Naive thymus-derived CD4-positive, alpha-beta T cell (primary cell): ENCODE measurements at regions of chr11 and their contacts with region 1.

Region 1: GRCh38 chr11:35165423-35166368 is 26.7 kb downstream of the CD44 start:
- DNase-seq: peak; percentile 39 to 99 (median 98)
- ATAC-seq: peak; percentile 81
- H3K4me3 ChIP-seq: peak overlapping the region; percentile 49
- H3K4me3 Mint-ChIP-seq: peak overlapping the region; percentile 69 to 94 (median 85)
- H3K27ac ChIP-seq: peak overlapping the region; percentile 94
- H3K27ac Mint-ChIP-seq: peak overlapping the region; percentile 89 to 100 (median 100)
- H3K4me1 ChIP-seq: peaks cover 96% of the 10 kb centered on the region in 2 donors
- H3K4me1 Mint-ChIP-seq: peaks cover 66 to 100% (median 100%) of the 10 kb centered on the region in 7 donors
- H3K27me3 ChIP-seq: no peaks in the 10 kb centered on the region
- H3K27me3 Mint-ChIP-seq: no peaks in the 10 kb centered on the region

Region 2: DNA sequence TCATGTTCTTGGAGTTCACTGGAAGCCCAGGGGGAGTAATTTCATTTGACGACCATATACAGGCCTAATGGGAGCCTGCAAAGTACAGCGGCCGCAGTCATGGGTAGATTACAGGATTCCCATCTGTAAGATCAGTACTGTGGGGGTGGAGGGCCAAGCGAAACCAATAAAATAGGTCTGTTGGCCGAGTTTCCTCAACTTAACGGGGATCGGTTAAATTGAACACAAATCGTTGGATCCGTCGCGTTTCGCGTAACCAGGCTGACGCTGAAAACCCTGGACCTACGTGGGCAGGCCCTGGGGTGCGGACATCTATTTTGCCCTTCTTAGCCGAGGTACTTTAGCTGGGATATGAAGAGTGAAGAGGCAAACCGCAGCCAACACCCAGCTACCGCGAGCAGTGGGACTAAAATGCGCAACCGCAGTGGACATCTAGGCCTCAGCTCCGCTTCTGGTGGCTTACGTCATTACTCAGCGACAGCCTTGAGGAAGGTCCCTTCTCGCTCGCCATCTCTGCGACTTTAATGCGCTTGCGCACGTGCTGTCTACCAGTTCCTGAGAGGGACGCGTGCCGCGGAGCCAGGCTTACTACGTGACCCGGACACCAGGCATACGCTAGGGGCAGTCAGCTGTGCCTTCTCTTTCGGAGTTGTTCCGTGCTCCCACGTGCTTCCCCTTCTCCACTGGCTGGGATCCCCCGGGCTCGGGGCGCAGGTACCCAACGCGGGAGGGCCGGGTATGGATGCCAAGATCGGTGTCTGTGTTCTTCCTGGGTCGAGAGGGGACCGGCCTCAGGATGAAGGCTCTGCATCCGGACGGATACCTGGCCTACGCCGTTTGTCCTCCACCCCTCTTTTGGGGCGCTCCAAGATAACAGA is 1060.4 kb before region 1 on chr11 and contains the start of gene NAT10:
- CTCF ChIA-PET with region 1: no interaction called
- POLR2A ChIA-PET with region 1: no interaction called
- intact Hi-C with region 1: loop called in 1 of 2 experiments (anchors 5 kb)
- DNase-seq: peak; percentile 84 to 98 (median 96)
- ATAC-seq: peak; percentile 97
- H3K4me3 ChIP-seq: peak within 1 kb of the TSS; percentile 91
- H3K4me3 Mint-ChIP-seq: peak within 1 kb of the TSS; percentile 89 to 100 (median 97)
- H3K27ac ChIP-seq: peak within 1 kb of the TSS; percentile 83
- H3K27ac Mint-ChIP-seq: peak within 1 kb of the TSS; percentile 97 to 99 (median 99)
- H3K4me1 ChIP-seq: peaks cover 18 to 21% of the 10 kb centered on the region in 2 donors
- H3K4me1 Mint-ChIP-seq: peaks cover 26 to 76% (median 64%) of the 10 kb centered on the region in 7 donors
- H3K27me3 ChIP-seq: no peaks in the 10 kb centered on the region
- H3K27me3 Mint-ChIP-seq: peaks cover 0 to 5% (median 0%) of the 10 kb centered on the region in 5 donors
- total RNA-seq, gene NAT10: 55.7 to 104 (median 84.3) TPM

Region 3: DNA sequence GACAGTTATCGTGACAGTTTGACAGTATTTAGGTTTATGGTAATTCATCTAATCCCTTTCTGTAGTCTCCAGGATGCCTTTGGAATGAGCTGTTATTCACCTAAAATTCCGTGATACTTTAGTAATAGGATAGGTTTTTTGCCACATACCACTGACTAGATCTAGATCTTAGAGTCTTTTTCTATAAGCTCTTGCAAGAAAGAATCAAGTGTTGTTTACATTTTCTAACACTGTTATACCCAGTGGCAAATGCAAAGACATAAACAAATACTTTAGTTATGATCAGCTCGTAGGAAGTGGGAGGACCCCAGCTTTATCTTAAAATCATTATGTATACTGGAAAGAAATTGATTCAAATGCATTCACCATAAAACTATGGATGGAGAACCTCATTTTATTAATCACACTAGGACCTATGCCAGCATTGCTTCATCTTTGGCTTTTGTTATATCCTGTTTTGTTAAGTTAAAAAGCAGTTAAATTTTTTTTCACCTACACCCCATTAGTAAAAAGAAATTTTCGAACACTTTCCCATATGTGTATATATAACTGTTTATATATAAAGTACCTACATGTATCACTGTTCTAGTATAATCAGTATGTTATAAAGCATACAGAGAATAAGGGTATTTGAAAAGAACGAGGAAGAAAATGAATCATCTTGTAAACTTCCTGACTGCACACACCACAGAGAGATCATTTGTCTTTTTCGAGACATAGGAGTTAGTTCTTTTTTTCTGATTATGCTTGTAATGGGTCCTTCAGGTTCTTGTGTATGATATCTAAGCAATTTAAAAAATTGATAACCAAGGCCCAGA is 188.4 kb before region 1 on chr11:
- CTCF ChIA-PET with region 1: no interaction called
- POLR2A ChIA-PET with region 1: no interaction called
- intact Hi-C with region 1: no loop called
- DNase-seq: no peak
- ATAC-seq: no peak
- H3K4me3 ChIP-seq: no peak overlapping the region
- H3K4me3 Mint-ChIP-seq: no peak overlapping the region
- H3K27ac ChIP-seq: no peak overlapping the region
- H3K27ac Mint-ChIP-seq: peak overlapping the region in 1 of 9 donors; percentile 1
- H3K4me1 ChIP-seq: no peaks in the 10 kb centered on the region
- H3K4me1 Mint-ChIP-seq: peaks cover 17 to 46% (median 30%) of the 10 kb centered on the region in 7 donors
- H3K27me3 ChIP-seq: no peaks in the 10 kb centered on the region
- H3K27me3 Mint-ChIP-seq: no peaks in the 10 kb centered on the region

Region 4: DNA sequence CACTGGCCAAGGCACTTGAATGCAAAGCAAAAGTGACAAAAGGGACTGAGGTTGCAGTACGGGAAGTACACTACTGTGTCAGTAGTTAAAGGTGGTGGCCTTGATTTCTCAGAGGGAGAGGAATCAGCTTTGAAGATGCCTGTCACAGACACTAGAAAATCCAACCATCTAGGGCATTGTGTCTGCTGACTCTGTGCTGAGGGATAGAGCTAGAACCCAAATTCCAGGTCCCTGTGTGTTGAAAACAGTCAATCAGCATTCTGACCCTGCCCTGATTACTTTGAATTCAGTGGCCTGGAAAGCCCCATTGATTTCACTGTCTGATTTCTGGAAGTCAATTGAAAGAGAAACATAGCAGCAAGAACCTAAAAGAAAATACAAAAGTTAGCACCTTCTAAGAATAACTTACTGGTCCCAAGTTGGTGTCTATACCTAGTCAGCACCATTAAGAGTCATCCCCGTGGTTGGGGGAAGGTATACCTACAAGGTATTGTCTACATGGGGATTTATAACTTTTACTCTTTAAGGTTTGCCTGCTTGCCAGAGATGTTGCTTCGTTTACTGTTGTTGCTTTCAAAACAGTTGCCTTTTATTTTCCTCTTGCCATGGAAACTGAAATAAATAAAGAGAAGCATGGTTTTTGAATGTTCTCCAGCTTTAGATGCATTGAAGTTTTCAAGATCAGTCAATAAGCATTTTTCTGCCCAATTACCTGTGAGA is 152.0 kb before region 1 on chr11:
- CTCF ChIA-PET with region 1: no interaction called
- POLR2A ChIA-PET with region 1: interaction called, 6 read pairs
- intact Hi-C with region 1: loop called in 1 of 2 experiments (anchors 1 kb)
- DNase-seq: peak in 8 of 9 donors; percentile 8 to 68 (median 40)
- ATAC-seq: peak; percentile 79
- H3K4me3 ChIP-seq: no peak overlapping the region
- H3K4me3 Mint-ChIP-seq: peak overlapping the region; percentile 12 to 80 (median 49)
- H3K27ac ChIP-seq: peak overlapping the region; percentile 49
- H3K27ac Mint-ChIP-seq: peak overlapping the region; percentile 66 to 95 (median 84)
- H3K4me1 ChIP-seq: peaks cover 18 to 25% of the 10 kb centered on the region in 2 donors
- H3K4me1 Mint-ChIP-seq: peaks cover 19 to 40% (median 27%) of the 10 kb centered on the region in 7 donors
- H3K27me3 ChIP-seq: no peaks in the 10 kb centered on the region
- H3K27me3 Mint-ChIP-seq: peaks cover 0 to 40% (median 0%) of the 10 kb centered on the region in 5 donors

Region 5: DNA sequence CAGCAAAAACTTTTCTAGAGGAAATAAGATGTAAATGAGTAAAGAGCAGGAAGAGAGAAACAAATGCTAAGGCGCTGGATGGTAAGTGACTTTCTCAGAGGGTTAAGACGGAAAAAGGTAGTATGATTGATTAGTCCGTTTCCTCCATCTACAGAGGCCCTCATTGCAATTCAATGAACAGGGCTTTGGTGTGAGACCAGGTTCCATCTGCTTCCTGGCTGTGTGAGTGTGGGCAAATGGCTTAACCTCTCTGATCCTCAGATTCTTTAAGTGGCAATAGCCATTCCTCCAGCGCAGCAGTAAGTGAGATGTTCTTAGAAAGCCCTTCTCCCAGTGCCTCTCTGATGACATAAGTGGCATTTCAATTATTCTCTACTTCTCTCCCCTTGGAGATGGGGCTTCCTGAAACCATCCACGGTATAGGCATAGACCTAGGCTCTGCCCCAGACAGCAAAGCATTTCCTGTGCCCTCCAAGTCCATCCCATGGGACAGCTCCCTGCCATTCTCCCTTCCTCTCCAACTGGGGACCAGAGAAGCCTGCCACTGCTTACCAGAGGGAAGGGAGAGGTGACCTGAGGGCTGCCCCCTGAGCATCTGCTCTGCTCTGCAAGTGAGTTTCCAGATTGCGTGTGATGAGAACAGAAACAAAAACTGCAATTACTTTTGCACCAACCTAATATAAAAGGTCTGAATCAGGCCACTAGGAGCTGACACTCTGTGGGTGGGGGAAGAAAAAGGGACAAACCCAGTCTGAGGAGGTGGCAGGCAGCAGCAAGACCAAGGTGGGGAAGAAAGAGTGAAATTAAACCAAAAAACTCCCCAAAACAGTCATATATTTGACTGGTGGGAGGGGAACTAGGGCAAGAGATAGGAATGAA is 39.5 kb before region 1 on chr11:
- CTCF ChIA-PET with region 1: no interaction called
- POLR2A ChIA-PET with region 1: interaction called, 3 read pairs
- intact Hi-C with region 1: loop called in 1 of 2 experiments (anchors 5 kb)
- DNase-seq: peak in 2 of 9 donors; percentile 27 to 62
- ATAC-seq: peak; percentile 59
- H3K4me3 ChIP-seq: peak overlapping the region; percentile 17
- H3K4me3 Mint-ChIP-seq: peak overlapping the region; percentile 42 to 69 (median 60)
- H3K27ac ChIP-seq: peak overlapping the region; percentile 12
- H3K27ac Mint-ChIP-seq: peak overlapping the region; percentile 44 to 92 (median 82)
- H3K4me1 ChIP-seq: peaks cover 33 to 49% of the 10 kb centered on the region in 2 donors
- H3K4me1 Mint-ChIP-seq: peaks cover 32 to 69% (median 64%) of the 10 kb centered on the region in 7 donors
- H3K27me3 ChIP-seq: no peaks in the 10 kb centered on the region
- H3K27me3 Mint-ChIP-seq: peaks cover 0 to 8% (median 0%) of the 10 kb centered on the region in 5 donors

Region 6: GRCh38 chr11:35178873-35179272 is 13.2 kb after region 1 on chr11:
- CTCF ChIA-PET with region 1: interaction called, 27 read pairs
- POLR2A ChIA-PET with region 1: interaction called, 354 read pairs
- intact Hi-C with region 1: loop called (anchors 1 kb)
- DNase-seq: no peak
- ATAC-seq: no peak
- H3K4me3 ChIP-seq: no peak overlapping the region
- H3K4me3 Mint-ChIP-seq: peak overlapping the region in 9 of 10 donors; percentile 44 to 77 (median 59)
- H3K27ac ChIP-seq: peak overlapping the region; percentile 65
- H3K27ac Mint-ChIP-seq: peak overlapping the region; percentile 85 to 100 (median 94)
- H3K4me1 ChIP-seq: peaks cover 84 to 89% of the 10 kb centered on the region in 2 donors
- H3K4me1 Mint-ChIP-seq: peaks cover 62 to 93% (median 91%) of the 10 kb centered on the region in 7 donors
- H3K27me3 ChIP-seq: no peaks in the 10 kb centered on the region
- H3K27me3 Mint-ChIP-seq: no peaks in the 10 kb centered on the region

Region 7: GRCh38 chr11:35246745-35247144 is 81.0 kb after region 1 on chr11:
- CTCF ChIA-PET with region 1: interaction called, 3 read pairs
- POLR2A ChIA-PET with region 1: interaction called, 7 read pairs
- intact Hi-C with region 1: loop called in 1 of 2 experiments (anchors 1 kb)
- DNase-seq: no peak
- ATAC-seq: no peak
- H3K4me3 ChIP-seq: no peak overlapping the region
- H3K4me3 Mint-ChIP-seq: peak overlapping the region in 5 of 10 donors; percentile 14 to 81 (median 70)
- H3K27ac ChIP-seq: peak overlapping the region; percentile 75
- H3K27ac Mint-ChIP-seq: peak overlapping the region; percentile 40 to 100 (median 99)
- H3K4me1 ChIP-seq: peaks cover 58 to 63% of the 10 kb centered on the region in 2 donors
- H3K4me1 Mint-ChIP-seq: peaks cover 24 to 92% (median 69%) of the 10 kb centered on the region in 7 donors
- H3K27me3 ChIP-seq: no peaks in the 10 kb centered on the region
- H3K27me3 Mint-ChIP-seq: peaks cover 0 to 4% (median 0%) of the 10 kb centered on the region in 5 donors

Region 8: GRCh38 chr11:35343033-35343598 is 177.4 kb after region 1 on chr11:
- CTCF ChIA-PET with region 1: no interaction called
- POLR2A ChIA-PET with region 1: no interaction called
- intact Hi-C with region 1: loop called in 1 of 2 experiments (anchors 1 kb)
- DNase-seq: peak in 8 of 9 donors; percentile 19 to 69 (median 54)
- ATAC-seq: peak; percentile 62
- H3K4me3 ChIP-seq: no peak overlapping the region
- H3K4me3 Mint-ChIP-seq: peak overlapping the region; percentile 33 to 82 (median 66)
- H3K27ac ChIP-seq: peak overlapping the region; percentile 2
- H3K27ac Mint-ChIP-seq: peak overlapping the region; percentile 82 to 91 (median 85)
- H3K4me1 ChIP-seq: peaks cover 3 to 43% of the 10 kb centered on the region in 2 donors
- H3K4me1 Mint-ChIP-seq: peaks cover 29 to 80% (median 59%) of the 10 kb centered on the region in 7 donors
- H3K27me3 ChIP-seq: no peaks in the 10 kb centered on the region
- H3K27me3 Mint-ChIP-seq: peaks cover 0 to 2% (median 0%) of the 10 kb centered on the region in 5 donors

Region 9: DNA sequence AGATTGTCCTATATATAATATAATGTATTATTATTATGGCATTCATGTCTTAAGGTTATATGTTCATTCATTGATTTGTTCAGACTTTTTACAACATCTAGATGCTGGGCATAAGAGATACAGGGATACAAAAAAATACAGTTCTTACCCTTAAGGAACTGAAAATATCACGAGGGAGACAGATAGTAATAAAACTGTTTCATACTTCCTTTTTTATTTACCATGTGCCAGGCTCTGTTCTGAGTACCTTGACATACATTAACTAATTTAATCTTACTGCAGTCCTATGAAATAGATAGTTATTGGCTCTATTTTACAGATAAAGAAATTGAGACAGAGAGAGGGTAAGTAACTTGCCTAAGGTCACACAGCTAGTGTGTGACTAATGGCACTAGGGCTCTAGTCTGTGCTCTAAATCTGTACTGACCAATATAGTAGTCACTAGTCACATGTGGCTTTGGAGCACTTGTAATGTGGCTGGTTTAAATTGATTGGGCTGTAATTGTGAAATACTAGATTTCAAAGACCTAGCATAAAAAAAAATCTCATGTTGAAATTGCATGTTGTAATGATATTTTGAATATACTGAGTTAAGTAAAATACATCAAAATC is 518.1 kb after region 1 on chr11:
- CTCF ChIA-PET with region 1: no interaction called
- POLR2A ChIA-PET with region 1: no interaction called
- intact Hi-C with region 1: no loop called
- DNase-seq: no peak
- ATAC-seq: peak; percentile 80
- H3K4me3 ChIP-seq: no peak overlapping the region
- H3K4me3 Mint-ChIP-seq: no peak overlapping the region
- H3K27ac ChIP-seq: no peak overlapping the region
- H3K27ac Mint-ChIP-seq: no peak overlapping the region
- H3K4me1 ChIP-seq: peaks cover 0 to 5% of the 10 kb centered on the region in 2 donors
- H3K4me1 Mint-ChIP-seq: peaks cover 18 to 72% (median 67%) of the 10 kb centered on the region in 7 donors
- H3K27me3 ChIP-seq: no peaks in the 10 kb centered on the region
- H3K27me3 Mint-ChIP-seq: no peaks in the 10 kb centered on the region